Right cardiac atrium (tissue), 5 donors: ENCODE measurements at regions of chr2 and their contacts with region 1.

Region 1: GRCh38 chr2:164430166-164430783 is 191.0 kb downstream of the GRB14 start:
- DNase-seq: no peak
- ATAC-seq: no peak
- H3K4me3 ChIP-seq: no peak overlapping the region
- H3K27ac ChIP-seq: no peak overlapping the region
- H3K4me1 ChIP-seq: no peaks in the 10 kb centered on the region
- H3K27me3 ChIP-seq: no peaks in the 10 kb centered on the region

Region 2: DNA sequence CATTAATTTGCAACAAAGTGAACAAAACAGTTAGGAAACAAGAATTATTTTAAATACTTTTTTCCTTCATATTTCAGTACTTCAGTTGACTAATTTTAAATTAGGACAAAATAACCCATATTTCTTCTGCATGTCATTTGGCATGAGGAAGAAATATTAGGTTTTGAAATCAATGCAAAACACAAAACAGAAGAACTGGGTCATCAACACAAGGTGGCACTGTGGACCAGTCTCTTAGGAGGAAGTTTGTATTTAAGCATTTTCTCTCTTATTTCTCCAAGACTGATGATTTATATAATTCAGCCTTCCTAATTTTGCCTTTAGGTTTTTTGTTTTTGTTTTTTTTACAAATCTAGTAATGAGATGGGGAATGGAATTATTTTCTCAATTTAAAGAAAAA is 1238.9 kb before region 1 on chr2:
- intact Hi-C with region 1: loop called in 3 of 4 experiments (anchors 5 to 10 kb)
- DNase-seq: no peak
- ATAC-seq: no peak
- H3K4me3 ChIP-seq: no peak overlapping the region
- H3K27ac ChIP-seq: no peak overlapping the region
- H3K4me1 ChIP-seq: no peaks in the 10 kb centered on the region
- H3K27me3 ChIP-seq: no peaks in the 10 kb centered on the region